H1 (cell line): ENCODE measurements at regions of chr6 and their contacts with region 1.

Region 1: GRCh38 chr6:169831450-169832246 is 80.2 kb downstream of the ERMARD start:
- DNase-seq: peak; percentile 79 to 97
- H3K4me3 ChIP-seq: no peak overlapping the region
- H3K27ac ChIP-seq: no peak overlapping the region
- H3K4me1 ChIP-seq: peaks cover 0 to 15% (median 4%) of the 10 kb centered on the region in 4 experiments; a peak in 6 of 7 replicates
- H3K27me3 ChIP-seq: peaks cover 0 to 6% (median 0%) of the 10 kb centered on the region in 4 experiments; a peak in 2 of 7 replicates
- CTCF ChIP-seq: peak; percentile 89 to 97 (median 96)
- EP300 ChIP-seq: no peak
- POLR2A ChIP-seq: no peak
- RAD21 ChIP-seq: peak; percentile 88 to 91

Region 2: GRCh38 chr6:169701954-169702839 is 129.5 kb before region 1 on chr6 and contains the starts of genes C6orf120 and WDR27:
- CTCF ChIA-PET with region 1: no interaction called
- POLR2A ChIA-PET with region 1: no interaction called
- DNase-seq: peak; percentile 79 to 96
- H3K4me3 ChIP-seq: peak within 1 kb of the TSS; percentile 79 to 96 (median 94)
- H3K27ac ChIP-seq: peak within 1 kb of the TSS; percentile 88
- H3K4me1 ChIP-seq: peaks cover 0 to 16% (median 5%) of the 10 kb centered on the region in 4 experiments; a peak in 2 of 7 replicates
- H3K27me3 ChIP-seq: no peaks in the 10 kb centered on the region
- CTCF ChIP-seq: no peak
- EP300 ChIP-seq: no peak
- POLR2A ChIP-seq: peak; percentile 32 to 87
- RAD21 ChIP-seq: no peak
- total RNA-seq, gene C6orf120: 29.1 and 30.6 TPM in 2 replicates
- total RNA-seq, gene WDR27: 64.7 and 68.6 TPM in 2 replicates

Region 3: GRCh38 chr6:169800668-169801395 is 30.8 kb before region 1 on chr6:
- CTCF ChIA-PET with region 1: interaction called, 39 read pairs
- POLR2A ChIA-PET with region 1: no interaction called
- DNase-seq: peak in 1 of 2 experiments; percentile 44
- H3K4me3 ChIP-seq: no peak overlapping the region
- H3K27ac ChIP-seq: no peak overlapping the region
- H3K4me1 ChIP-seq: peaks cover 0 to 10% (median 2%) of the 10 kb centered on the region in 4 experiments; a peak in 4 of 7 replicates
- H3K27me3 ChIP-seq: peaks cover 0 to 2% (median 0%) of the 10 kb centered on the region in 4 experiments; a peak in 2 of 7 replicates
- CTCF ChIP-seq: no peak
- EP300 ChIP-seq: no peak
- POLR2A ChIP-seq: no peak
- RAD21 ChIP-seq: peak; percentile 18 to 20

Region 4: DNA sequence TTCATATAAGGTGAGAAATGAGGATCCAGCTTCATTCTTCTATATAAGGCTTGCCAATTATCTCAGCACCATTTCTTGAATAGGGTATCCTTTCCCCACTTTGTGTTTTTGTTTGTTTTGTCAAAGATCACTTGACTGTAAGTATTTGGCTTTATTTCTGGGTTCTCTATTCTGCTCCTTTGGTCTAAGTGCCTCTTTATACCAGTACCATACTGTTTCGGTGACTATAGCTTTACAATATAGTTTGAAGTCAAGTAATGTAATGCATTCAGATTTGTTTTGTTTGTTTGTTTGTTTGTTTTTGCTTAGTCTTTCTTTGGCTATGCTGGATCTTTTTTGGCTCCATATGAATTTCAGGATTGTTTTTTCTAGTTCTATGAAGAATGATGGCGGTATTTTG is 15.6 kb before region 1 on chr6:
- CTCF ChIA-PET with region 1: interaction called, 25 read pairs
- POLR2A ChIA-PET with region 1: no interaction called
- DNase-seq: no peak
- H3K4me3 ChIP-seq: no peak overlapping the region
- H3K27ac ChIP-seq: no peak overlapping the region
- H3K4me1 ChIP-seq: peaks cover 0 to 6% (median 0%) of the 10 kb centered on the region in 4 experiments; a peak in 3 of 7 replicates
- H3K27me3 ChIP-seq: no peaks in the 10 kb centered on the region
- CTCF ChIP-seq: no peak
- EP300 ChIP-seq: no peak
- POLR2A ChIP-seq: no peak
- RAD21 ChIP-seq: no peak

Region 5: GRCh38 chr6:169868458-169868857 is 36.8 kb after region 1 on chr6:
- CTCF ChIA-PET with region 1: interaction called, 14 read pairs
- POLR2A ChIA-PET with region 1: no interaction called
- DNase-seq: peak in 1 of 2 experiments; percentile 41
- H3K4me3 ChIP-seq: no peak overlapping the region
- H3K27ac ChIP-seq: no peak overlapping the region
- H3K4me1 ChIP-seq: no peaks in the 10 kb centered on the region
- H3K27me3 ChIP-seq: no peaks in the 10 kb centered on the region; a peak in 1 of 7 replicates
- CTCF ChIP-seq: no peak
- EP300 ChIP-seq: no peak
- POLR2A ChIP-seq: no peak
- RAD21 ChIP-seq: no peak

Region 6: GRCh38 chr6:169905041-169905807 is 73.6 kb after region 1 on chr6:
- CTCF ChIA-PET with region 1: interaction called, 11 read pairs
- POLR2A ChIA-PET with region 1: no interaction called
- DNase-seq: no peak
- H3K4me3 ChIP-seq: no peak overlapping the region
- H3K27ac ChIP-seq: no peak overlapping the region
- H3K4me1 ChIP-seq: peaks cover 0 to 4% (median 0%) of the 10 kb centered on the region in 4 experiments; a peak in 2 of 7 replicates
- H3K27me3 ChIP-seq: no peaks in the 10 kb centered on the region
- CTCF ChIP-seq: no peak
- EP300 ChIP-seq: no peak
- POLR2A ChIP-seq: no peak
- RAD21 ChIP-seq: no peak

Region 7: GRCh38 chr6:169959136-169960002 is 127.7 kb after region 1 on chr6:
- CTCF ChIA-PET with region 1: interaction called, 13 read pairs
- POLR2A ChIA-PET with region 1: no interaction called
- DNase-seq: peak in 1 of 2 experiments; percentile 41
- H3K4me3 ChIP-seq: no peak overlapping the region
- H3K27ac ChIP-seq: no peak overlapping the region
- H3K4me1 ChIP-seq: peaks cover 0 to 11% (median 4%) of the 10 kb centered on the region in 4 experiments; a peak in 2 of 7 replicates
- H3K27me3 ChIP-seq: peaks cover 0 to 16% (median 8%) of the 10 kb centered on the region in 4 experiments; a peak in 5 of 7 replicates
- CTCF ChIP-seq: no peak
- EP300 ChIP-seq: no peak
- POLR2A ChIP-seq: no peak
- RAD21 ChIP-seq: no peak